ENCODE measurements at regions of chr7 and their contacts with region 1.

Region 1: GRCh38 chr7:117493460-117493859 is 13.6 kb downstream of the CFTR start:
- DNase-seq: no peak
- ATAC-seq: no peak
- H3K4me3 ChIP-seq: no peak overlapping the region
- H3K27ac ChIP-seq: no peak overlapping the region
- H3K4me1 ChIP-seq: no peaks in the 10 kb centered on the region
- H3K27me3 ChIP-seq: no peaks in the 10 kb centered on the region
- CTCF ChIP-seq: no peak

Region 2: GRCh38 chr7:117119192-117119924 is 374.1 kb before region 1 on chr7:
- intact Hi-C with region 1: no loop called
- DNase-seq: peak; percentile 71 to 82
- ATAC-seq: peak in 6 of 8 donors; percentile 45 to 76 (median 57)
- H3K4me3 ChIP-seq: no peak overlapping the region
- H3K27ac ChIP-seq: no peak overlapping the region
- H3K4me1 ChIP-seq: peaks cover 0 to 30% (median 8%) of the 10 kb centered on the region in 9 donors
- H3K27me3 ChIP-seq: no peaks in the 10 kb centered on the region
- CTCF ChIP-seq: peak; percentile 60 to 94 (median 89)

Region 3: DNA sequence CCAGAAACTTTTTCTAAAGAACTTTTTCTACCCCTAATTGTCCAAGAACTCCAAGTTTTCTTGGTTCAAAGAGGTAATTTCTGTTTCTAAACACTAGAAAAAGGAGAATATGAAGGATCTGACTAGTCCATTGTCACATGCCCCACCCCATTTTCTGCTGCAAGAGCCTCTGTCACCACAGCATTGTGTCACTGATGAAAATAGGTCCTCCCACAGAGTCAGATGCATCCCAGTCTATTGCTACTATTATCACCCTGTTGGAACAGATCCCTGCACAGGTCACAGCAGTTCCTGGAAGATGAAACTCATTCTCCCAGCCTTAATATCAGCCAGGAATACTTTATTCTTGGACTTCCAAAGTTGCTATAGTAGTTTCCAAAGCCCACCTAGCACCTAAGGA is 21.1 kb before region 1 on chr7:
- intact Hi-C with region 1: loop called in 1 of 10 experiments (anchors 2 kb)
- DNase-seq: peak in 1 of 2 donors; percentile 38
- ATAC-seq: peak; percentile 65 to 98 (median 91)
- H3K4me3 ChIP-seq: no peak overlapping the region
- H3K27ac ChIP-seq: peak overlapping the region in 3 of 10 donors; percentile 3 to 49 (median 11)
- H3K4me1 ChIP-seq: no peaks in the 10 kb centered on the region
- H3K27me3 ChIP-seq: no peaks in the 10 kb centered on the region
- CTCF ChIP-seq: no peak

Region 4: DNA sequence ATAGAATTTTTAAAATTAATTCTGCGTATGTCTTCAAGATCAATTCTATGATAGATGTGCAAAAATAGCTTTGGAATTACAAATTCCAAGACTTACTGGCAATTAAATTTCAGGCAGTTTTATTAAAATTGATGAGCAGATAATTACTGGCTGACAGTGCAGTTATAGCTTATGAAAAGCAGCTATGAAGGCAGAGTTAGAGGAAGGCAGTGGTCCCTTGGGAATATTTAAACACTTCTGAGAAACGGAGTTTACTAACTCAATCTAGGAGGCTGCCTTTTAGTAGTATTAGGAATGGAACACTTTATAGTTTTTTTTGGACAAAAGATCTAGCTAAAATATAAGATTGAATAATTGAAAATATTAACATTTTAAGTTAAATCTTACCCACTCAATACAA is 57.2 kb after region 1 on chr7:
- intact Hi-C with region 1: loop called in 1 of 10 experiments (anchors 1 kb)
- DNase-seq: no peak
- ATAC-seq: no peak
- H3K4me3 ChIP-seq: no peak overlapping the region
- H3K27ac ChIP-seq: no peak overlapping the region
- H3K4me1 ChIP-seq: no peaks in the 10 kb centered on the region
- H3K27me3 ChIP-seq: no peaks in the 10 kb centered on the region
- CTCF ChIP-seq: no peak